ENCODE measurements at regions of chr6 and their contacts with region 1.

Region 1: DNA sequence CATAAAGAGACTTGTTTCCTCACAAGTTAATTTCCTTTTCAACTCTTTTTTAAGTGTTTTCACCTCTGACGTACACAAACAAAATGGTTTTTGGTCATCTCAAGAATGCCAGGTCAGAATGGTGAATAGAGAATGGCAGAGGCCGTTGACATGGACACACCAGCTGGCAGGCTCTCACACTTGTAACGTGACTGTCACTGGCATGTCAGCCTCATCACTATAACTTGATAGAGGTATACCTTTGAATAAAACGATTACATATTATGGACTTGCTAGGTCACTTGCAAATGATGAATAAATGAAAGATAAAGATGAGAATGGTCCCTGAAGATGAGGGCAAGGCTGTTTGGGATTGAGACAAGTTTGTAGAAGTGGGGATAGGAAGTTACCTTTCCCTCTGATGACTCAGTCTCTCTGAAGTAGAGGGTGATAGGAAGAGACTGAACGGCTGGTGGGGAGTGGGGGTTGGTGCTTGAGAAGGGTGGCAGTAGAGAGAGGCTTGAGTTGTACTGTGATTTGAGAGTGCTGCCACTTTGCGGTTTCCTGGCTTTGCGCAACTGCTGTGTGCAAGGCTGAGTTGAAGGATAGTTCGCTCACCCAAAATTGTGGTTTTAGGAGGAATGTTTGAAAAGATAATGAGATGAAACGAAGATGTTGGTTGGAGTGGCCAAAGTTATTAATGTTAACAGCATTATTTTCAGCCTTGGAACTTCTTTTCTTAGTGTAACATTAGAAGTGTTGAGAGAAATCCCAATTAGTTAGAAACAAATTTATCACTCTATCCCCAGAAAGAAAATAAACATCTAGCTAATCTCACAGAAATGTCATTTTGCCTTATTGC is 30.3 kb downstream of the TBPL1 start:
- DNase-seq: no peak
- ATAC-seq: peak; percentile 50; the same call in 1 of the 2 replicates
- H3K4me3 ChIP-seq: no peak overlapping the region
- H3K27ac ChIP-seq: peak overlapping the region; percentile 14; the same call in 1 of the 2 replicates
- H3K4me1 ChIP-seq: peaks cover 20% of the 10 kb centered on the region
- H3K27me3 ChIP-seq: no peaks in the 10 kb centered on the region
- CTCF ChIP-seq: no peak

Region 2: DNA sequence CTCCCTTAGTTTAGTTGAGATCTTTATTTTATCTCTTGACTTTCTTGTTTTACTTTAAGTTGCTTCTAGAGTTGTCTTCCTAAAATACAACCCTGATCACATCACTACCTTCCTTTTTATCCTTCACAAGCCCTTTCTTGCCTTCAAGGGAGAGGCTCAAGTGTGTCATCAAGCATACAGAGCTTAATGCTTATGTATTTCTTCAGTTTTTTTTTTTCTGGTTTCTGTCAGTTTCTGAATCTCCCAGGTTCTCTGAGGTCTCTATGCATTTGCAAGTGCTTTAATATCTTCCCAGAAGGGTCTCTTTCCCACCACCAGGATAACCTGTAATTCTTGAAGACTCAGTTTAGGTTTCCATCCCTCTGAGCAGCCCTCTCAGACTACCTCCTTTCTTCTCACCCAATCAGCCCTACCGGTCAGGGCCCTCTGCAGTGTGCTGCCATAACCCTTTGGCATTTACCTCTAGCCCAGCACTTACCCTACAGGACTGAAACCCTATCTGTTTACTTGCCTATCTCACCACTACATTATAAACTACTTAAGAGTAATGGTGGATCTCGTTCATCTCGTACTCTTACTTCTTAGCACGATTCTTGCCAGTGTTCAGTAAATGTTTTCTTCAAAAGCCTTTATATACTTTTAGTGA is 705.3 kb before region 1 on chr6:
- CTCF ChIA-PET with region 1: no interaction called
- POLR2A ChIA-PET with region 1: no interaction called
- in situ Hi-C with region 1: no loop called
- intact Hi-C with region 1: no loop called
- DNase-seq: no peak
- ATAC-seq: no peak
- H3K4me3 ChIP-seq: no peak overlapping the region
- H3K27ac ChIP-seq: no peak overlapping the region
- H3K4me1 ChIP-seq: no peaks in the 10 kb centered on the region
- H3K27me3 ChIP-seq: no peaks in the 10 kb centered on the region
- CTCF ChIP-seq: no peak

Region 3: GRCh38 chr6:133837801-133838349 is 145.4 kb before region 1 on chr6:
- CTCF ChIA-PET with region 1: no interaction called
- POLR2A ChIA-PET with region 1: no interaction called
- in situ Hi-C with region 1: no loop called
- intact Hi-C with region 1: no loop called
- DNase-seq: peak; percentile 20
- ATAC-seq: peak; percentile 97
- H3K4me3 ChIP-seq: peak overlapping the region; percentile 46 to 58
- H3K27ac ChIP-seq: no peak overlapping the region
- H3K4me1 ChIP-seq: no peaks in the 10 kb centered on the region
- H3K27me3 ChIP-seq: peaks cover 2% of the 10 kb centered on the region
- CTCF ChIP-seq: peak; percentile 95

Region 4: GRCh38 chr6:134003542-134003951 is 20.2 kb after region 1 on chr6:
- CTCF ChIA-PET with region 1: no interaction called
- POLR2A ChIA-PET with region 1: no interaction called
- in situ Hi-C with region 1: no loop called
- intact Hi-C with region 1: loop called (anchors 1 kb)
- DNase-seq: no peak
- ATAC-seq: no peak
- H3K4me3 ChIP-seq: no peak overlapping the region
- H3K27ac ChIP-seq: no peak overlapping the region
- H3K4me1 ChIP-seq: no peaks in the 10 kb centered on the region; the same call in 1 of the 2 replicates
- H3K27me3 ChIP-seq: no peaks in the 10 kb centered on the region
- CTCF ChIP-seq: no peak

Region 5: GRCh38 chr6:134056046-134056445 is 72.7 kb after region 1 on chr6:
- CTCF ChIA-PET with region 1: no interaction called
- POLR2A ChIA-PET with region 1: no interaction called
- in situ Hi-C with region 1: no loop called
- intact Hi-C with region 1: no loop called
- DNase-seq: no peak
- ATAC-seq: peak; percentile 54; the same call in 1 of the 2 replicates
- H3K4me3 ChIP-seq: no peak overlapping the region
- H3K27ac ChIP-seq: peak overlapping the region; percentile 59; the same call in 1 of the 2 replicates
- H3K4me1 ChIP-seq: peaks cover 43% of the 10 kb centered on the region
- H3K27me3 ChIP-seq: no peaks in the 10 kb centered on the region
- CTCF ChIP-seq: no peak

Region 6: GRCh38 chr6:134111062-134111677 is 127.9 kb after region 1 on chr6:
- CTCF ChIA-PET with region 1: no interaction called
- POLR2A ChIA-PET with region 1: interaction called, 12 read pairs
- in situ Hi-C with region 1: no loop called
- intact Hi-C with region 1: no loop called
- DNase-seq: peak; percentile 18
- ATAC-seq: peak; percentile 9; the same call in 1 of the 2 replicates
- H3K4me3 ChIP-seq: no peak overlapping the region
- H3K27ac ChIP-seq: no peak overlapping the region
- H3K4me1 ChIP-seq: peaks cover 11% of the 10 kb centered on the region
- H3K27me3 ChIP-seq: no peaks in the 10 kb centered on the region
- CTCF ChIP-seq: peak; percentile 94